A673 (cell line): ENCODE measurements at regions of chr3 and their contacts with region 1.

Region 1: GRCh38 chr3:158753854-158754253 is 21.6 kb upstream of the RARRES1 start:
- DNase-seq: no peak
- H3K4me3 ChIP-seq: no peak overlapping the region
- H3K27ac ChIP-seq: no peak overlapping the region
- H3K4me1 ChIP-seq: no peaks in the 10 kb centered on the region
- H3K27me3 ChIP-seq: no peaks in the 10 kb centered on the region
- CTCF ChIP-seq: no peak

Region 2: GRCh38 chr3:158775426-158776410 is 21.9 kb after region 1 on chr3:
- CTCF ChIA-PET with region 1: no interaction called
- POLR2A ChIA-PET with region 1: interaction called, 11 read pairs
- intact Hi-C with region 1: no loop called
- DNase-seq: peak; percentile 14
- H3K4me3 ChIP-seq: no peak overlapping the region
- H3K27ac ChIP-seq: no peak overlapping the region
- H3K4me1 ChIP-seq: no peaks in the 10 kb centered on the region
- H3K27me3 ChIP-seq: no peaks in the 10 kb centered on the region
- CTCF ChIP-seq: no peak

Region 3: GRCh38 chr3:158830391-158830790 is 76.5 kb after region 1 on chr3:
- CTCF ChIA-PET with region 1: no interaction called
- POLR2A ChIA-PET with region 1: no interaction called
- intact Hi-C with region 1: no loop called
- DNase-seq: no peak
- H3K4me3 ChIP-seq: no peak overlapping the region
- H3K27ac ChIP-seq: no peak overlapping the region
- H3K4me1 ChIP-seq: no peaks in the 10 kb centered on the region
- H3K27me3 ChIP-seq: no peaks in the 10 kb centered on the region
- CTCF ChIP-seq: no peak